ENCODE measurements at regions of chr2 and their contacts with region 1.

Region 1: DNA sequence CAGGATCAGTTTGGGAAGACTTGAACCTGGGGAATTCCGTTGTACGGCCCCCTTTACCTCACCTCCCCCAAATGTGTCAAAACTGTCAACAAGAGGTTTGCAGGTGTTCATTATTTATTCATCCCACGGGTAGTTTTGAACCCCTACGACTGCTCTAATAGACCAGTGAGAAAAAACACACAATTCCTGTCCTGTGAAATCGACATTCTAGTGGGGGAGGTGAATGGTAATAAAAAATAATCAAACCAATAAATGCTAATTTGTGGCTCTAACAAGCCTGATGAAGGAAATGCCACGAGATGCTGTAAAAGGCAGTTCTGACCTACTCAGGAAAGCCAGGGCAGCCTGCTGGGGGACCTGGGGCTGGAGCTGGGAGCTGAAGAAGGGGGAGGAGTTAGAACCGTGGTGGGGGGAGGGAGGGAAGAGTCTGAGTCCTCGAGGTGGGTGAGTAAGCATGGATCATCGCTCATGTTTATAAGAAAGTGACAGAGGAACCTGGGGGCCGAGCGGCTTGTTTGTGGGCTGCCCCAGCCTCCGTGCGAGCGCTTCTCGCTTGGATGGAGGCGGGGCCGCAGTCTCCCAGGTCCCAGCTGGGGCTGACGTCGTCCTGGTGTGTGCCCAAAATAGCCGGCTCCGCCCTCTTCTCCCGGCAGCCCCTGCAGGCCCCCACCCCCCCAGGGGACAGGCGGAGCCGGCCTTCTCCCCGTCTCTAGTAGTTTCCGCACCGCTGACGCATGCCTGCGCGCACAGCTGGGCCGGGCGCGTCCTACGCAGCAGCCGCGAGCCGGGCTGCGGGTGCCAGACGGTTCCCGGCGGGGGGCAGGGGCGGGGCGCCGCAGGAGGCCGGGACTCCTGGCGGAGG is at the start of gene DNAJB2:
- DNase-seq: peak; percentile 99
- H3K4me3 Mint-ChIP-seq: peak within 1 kb of the TSS; percentile 87
- H3K27ac Mint-ChIP-seq: peak within 1 kb of the TSS; percentile 83
- H3K4me1 Mint-ChIP-seq: peaks cover 52% of the 10 kb centered on the region
- H3K27me3 Mint-ChIP-seq: no peaks in the 10 kb centered on the region
- CTCF ChIP-seq: no peak
- total RNA-seq, gene DNAJB2: 55.1 and 68.2 TPM in 2 replicates

Region 2: DNA sequence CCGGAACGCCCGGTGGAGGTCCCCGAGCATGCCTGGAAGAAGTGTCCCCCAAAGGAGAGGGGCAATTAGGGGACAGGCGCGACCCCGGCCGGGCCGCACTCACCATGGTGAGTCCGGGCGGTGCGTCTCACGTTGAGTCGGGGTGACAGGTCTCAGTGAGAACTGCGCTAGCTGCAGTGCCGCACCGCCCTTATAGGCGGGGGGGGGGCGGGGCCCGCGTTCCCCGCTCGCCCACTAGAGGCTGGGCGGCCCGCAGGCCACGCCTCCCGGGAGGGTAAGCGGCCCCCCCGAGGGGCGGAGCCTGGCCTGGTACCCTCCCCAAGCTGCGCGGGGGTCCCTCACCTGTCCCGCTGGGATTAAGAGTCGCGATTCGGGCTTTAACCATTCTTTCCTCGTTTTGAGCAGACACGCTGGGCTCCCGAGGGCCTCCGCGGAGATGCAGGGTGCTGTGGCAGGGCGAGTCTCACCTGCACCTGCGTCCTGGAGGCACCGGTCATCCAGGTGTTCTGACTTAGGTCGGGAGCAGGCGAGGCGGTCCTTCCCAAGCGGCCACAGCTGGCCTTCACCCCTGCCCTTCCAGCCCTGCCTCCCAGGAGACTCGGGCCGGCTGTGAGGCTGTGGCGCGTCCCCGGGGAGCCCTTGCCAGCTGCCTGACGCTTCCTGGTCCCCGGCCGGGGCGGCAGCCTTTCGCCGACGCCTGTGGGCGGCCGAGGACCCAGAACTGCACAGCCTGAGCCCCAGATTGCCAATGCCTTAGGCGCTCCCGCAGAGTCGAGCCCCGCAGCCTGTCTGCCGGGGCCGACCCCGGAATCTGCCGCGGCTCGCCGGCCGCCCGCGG is 24.9 kb before region 1 on chr2 and contains the start of gene TUBA4A:
- CTCF ChIA-PET with region 1: interaction called, 16 read pairs
- intact Hi-C with region 1: loop called (anchors 1 kb)
- DNase-seq: peak; percentile 87
- H3K4me3 Mint-ChIP-seq: peak within 1 kb of the TSS; percentile 95
- H3K27ac Mint-ChIP-seq: peak within 1 kb of the TSS; percentile 70
- H3K4me1 Mint-ChIP-seq: peaks cover 45% of the 10 kb centered on the region
- H3K27me3 Mint-ChIP-seq: peaks cover 1% of the 10 kb centered on the region
- CTCF ChIP-seq: no peak
- total RNA-seq, gene TUBA4A: 68.8 and 97.9 TPM in 2 replicates